ENCODE measurements at regions of chr11 and their contacts with region 1.

Region 1: GRCh38 chr11:66317723-66318599 is 1.1 kb upstream of the CD248 start:
- DNase-seq: peak; percentile 90
- H3K4me3 Mint-ChIP-seq: peak overlapping the region; percentile 50
- H3K27ac Mint-ChIP-seq: peak overlapping the region; percentile 86
- H3K4me1 Mint-ChIP-seq: peaks cover 22% of the 10 kb centered on the region
- H3K27me3 Mint-ChIP-seq: no peaks in the 10 kb centered on the region
- CTCF ChIP-seq: no peak

Region 2: DNA sequence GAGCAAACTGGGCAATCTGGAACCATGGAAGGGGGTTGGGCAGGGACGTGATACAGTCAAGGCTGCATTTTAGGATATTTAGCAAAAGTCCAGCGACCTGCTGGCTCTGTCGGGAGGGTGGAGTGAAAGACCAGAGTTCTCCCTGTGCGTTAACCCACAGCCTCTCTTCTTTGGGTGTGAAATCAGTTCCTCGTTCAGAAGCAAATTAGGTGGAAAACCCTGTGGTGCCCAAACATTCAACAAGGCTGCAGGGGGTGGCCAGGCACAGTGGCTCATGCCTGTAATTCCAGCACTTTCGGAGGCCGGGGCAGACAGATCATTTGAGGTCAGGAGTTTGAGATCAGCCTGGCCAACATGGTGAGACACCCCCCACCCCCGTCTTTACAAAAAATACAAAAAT is 20.4 kb before region 1 on chr11:
- CTCF ChIA-PET with region 1: no interaction called
- POLR2A ChIA-PET with region 1: no interaction called
- intact Hi-C with region 1: no loop called
- DNase-seq: no peak
- H3K4me3 Mint-ChIP-seq: no peak overlapping the region
- H3K27ac Mint-ChIP-seq: no peak overlapping the region
- H3K4me1 Mint-ChIP-seq: peaks cover 4% of the 10 kb centered on the region
- H3K27me3 Mint-ChIP-seq: peaks cover 7% of the 10 kb centered on the region
- CTCF ChIP-seq: no peak

Region 3: DNA sequence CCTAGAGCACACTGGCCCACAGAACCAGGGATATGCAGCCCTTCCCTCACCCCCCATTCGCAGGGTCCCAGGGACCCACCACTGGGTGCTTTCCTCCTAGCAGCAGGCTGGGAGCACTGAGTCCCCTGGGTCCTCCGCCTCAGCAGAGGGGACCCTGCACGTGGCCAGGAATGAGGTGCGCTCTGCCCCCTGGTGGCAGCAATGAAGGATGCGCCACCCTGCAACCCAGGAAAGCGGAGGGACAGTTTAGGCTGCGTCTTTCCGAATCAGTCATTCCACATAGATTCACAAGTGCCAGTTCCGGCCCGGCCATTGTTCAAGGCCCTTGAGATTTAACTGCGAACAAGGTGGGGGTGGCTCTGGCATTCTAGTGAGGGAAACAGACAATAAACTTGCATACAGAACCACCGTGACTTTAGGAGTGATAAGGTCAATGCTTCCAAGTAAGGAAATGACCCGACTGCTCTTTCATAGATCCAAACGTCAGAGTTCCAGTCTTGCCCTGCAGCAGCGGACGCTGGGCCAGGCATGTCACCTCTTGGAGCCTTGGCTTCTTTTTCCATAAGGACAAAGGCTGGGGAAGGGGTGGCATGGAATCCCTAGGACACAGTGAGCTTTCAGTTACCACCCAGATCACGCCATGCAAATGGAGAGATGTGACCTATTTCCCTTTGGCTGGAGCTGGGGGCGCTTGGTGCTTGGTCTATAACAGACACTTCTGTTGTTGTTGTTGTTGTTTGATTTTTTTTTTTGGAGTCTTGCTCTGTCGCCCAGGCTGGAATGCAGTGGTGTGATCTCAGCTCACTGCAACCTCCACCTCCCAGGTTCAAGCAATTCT is 10.6 kb after region 1 on chr11:
- CTCF ChIA-PET with region 1: interaction called, 48 read pairs
- POLR2A ChIA-PET with region 1: interaction called, 45 read pairs
- intact Hi-C with region 1: no loop called
- DNase-seq: peak; percentile 78
- H3K4me3 Mint-ChIP-seq: no peak overlapping the region
- H3K27ac Mint-ChIP-seq: peak overlapping the region; percentile 4
- H3K4me1 Mint-ChIP-seq: peaks cover 46% of the 10 kb centered on the region
- H3K27me3 Mint-ChIP-seq: no peaks in the 10 kb centered on the region
- CTCF ChIP-seq: peak; percentile 91

Region 4: DNA sequence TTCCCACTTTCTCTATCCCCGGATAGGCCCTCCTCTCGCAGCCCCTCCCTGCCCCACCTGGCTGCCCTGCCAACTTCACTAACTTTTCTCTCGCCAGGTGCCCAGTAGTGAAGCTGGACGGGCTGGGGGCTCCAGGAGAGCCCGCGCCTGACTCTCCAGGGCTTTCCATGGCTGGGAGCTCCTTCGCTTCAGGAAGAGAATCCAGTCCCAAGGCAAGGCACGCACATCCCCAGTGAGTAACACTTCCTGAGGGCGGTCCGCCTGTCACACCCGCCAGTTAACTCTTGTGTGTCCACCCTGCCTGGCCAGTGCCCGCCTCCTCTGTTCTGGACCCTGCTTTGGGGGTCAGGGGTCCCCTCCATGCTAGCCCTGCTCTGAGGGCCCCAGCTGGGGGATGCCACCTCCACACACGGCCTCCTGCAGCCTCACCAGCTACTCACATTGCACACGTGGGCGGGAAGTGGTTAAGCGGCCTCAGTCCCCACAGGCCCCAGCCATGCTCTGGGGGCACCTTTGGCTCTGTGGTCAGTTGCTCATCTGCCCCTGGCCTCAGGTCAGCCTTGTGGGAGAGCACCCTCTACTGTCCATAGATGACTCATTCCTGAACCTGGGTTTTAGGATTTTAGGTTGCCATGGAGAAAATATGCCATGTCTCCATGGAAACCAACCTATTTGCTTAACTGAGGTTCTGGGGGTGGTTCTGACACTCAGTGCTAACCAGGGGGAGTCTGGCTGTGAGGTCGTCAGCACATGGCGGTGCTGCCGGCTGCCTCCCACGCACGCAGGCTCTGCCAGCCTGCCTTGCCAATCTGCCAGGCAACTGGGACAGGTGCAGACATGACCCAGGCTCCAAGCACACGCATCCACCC is 18.5 kb after region 1 on chr11 and contains the start of gene RIN1:
- CTCF ChIA-PET with region 1: interaction called, 48 read pairs
- POLR2A ChIA-PET with region 1: interaction called, 45 read pairs
- intact Hi-C with region 1: no loop called
- DNase-seq: peak; percentile 96
- H3K4me3 Mint-ChIP-seq: peak within 1 kb of the TSS; percentile 89
- H3K27ac Mint-ChIP-seq: peak within 1 kb of the TSS; percentile 95
- H3K4me1 Mint-ChIP-seq: peaks cover 30% of the 10 kb centered on the region
- H3K27me3 Mint-ChIP-seq: no peaks in the 10 kb centered on the region
- CTCF ChIP-seq: no peak
- total RNA-seq, gene RIN1: 38.7 and 50.2 TPM in 2 replicates